Ovary (tissue), 10 donors: ENCODE measurements at regions of chr16 and their contacts with region 1.

Region 1: GRCh38 chr16:11356573-11357331 is 11.5 kb downstream of the RMI2 start:
- DNase-seq: peak; percentile 70 to 82 (median 78)
- H3K4me3 ChIP-seq: no peak overlapping the region
- H3K27ac ChIP-seq: no peak overlapping the region
- H3K4me1 ChIP-seq: peaks cover 17% of the 10 kb centered on the region
- H3K27me3 ChIP-seq: no peaks in the 10 kb centered on the region
- CTCF ChIP-seq: peak; percentile 40 to 51 (median 49)
- EP300 ChIP-seq: no peak
- POLR2A ChIP-seq: no peak

Region 2: GRCh38 chr16:10964039-10964890 is 392.5 kb before region 1 on chr16:
- intact Hi-C with region 1: loop called in 2 of 4 experiments (anchors 10 kb)
- DNase-seq: peak; percentile 75 to 89 (median 85)
- H3K4me3 ChIP-seq: no peak overlapping the region
- H3K27ac ChIP-seq: no peak overlapping the region
- H3K4me1 ChIP-seq: no peaks in the 10 kb centered on the region
- H3K27me3 ChIP-seq: no peaks in the 10 kb centered on the region
- CTCF ChIP-seq: peak; percentile 81 to 93 (median 85)
- EP300 ChIP-seq: no peak
- POLR2A ChIP-seq: no peak

Region 3: DNA sequence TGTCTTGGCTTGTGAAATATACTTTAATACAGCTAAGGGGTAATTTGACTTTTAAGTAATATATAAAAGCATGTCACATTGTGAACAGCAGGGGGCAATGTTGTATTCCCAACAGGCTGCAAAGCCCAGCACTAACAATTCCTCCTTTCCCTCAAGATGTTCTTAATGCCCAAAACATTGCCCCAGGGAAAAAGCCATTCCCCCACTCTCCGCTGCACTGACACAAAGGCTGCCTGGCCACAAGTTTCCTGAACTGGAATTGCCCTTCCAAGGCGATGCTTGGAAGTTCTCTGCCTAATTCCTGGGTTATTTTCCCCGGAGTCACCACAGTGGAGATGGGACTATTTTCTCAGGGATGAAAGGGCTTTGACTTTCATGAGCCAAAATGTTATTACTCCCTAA is 385.2 kb before region 1 on chr16:
- intact Hi-C with region 1: loop called (anchors 5 to 10 kb)
- DNase-seq: peak in 4 of 5 donors; percentile 50 to 70 (median 56)
- H3K4me3 ChIP-seq: no peak overlapping the region
- H3K27ac ChIP-seq: no peak overlapping the region
- H3K4me1 ChIP-seq: peaks cover 7% of the 10 kb centered on the region
- H3K27me3 ChIP-seq: no peaks in the 10 kb centered on the region
- CTCF ChIP-seq: peak; percentile 74 to 93 (median 82)
- EP300 ChIP-seq: no peak
- POLR2A ChIP-seq: no peak

Region 4: DNA sequence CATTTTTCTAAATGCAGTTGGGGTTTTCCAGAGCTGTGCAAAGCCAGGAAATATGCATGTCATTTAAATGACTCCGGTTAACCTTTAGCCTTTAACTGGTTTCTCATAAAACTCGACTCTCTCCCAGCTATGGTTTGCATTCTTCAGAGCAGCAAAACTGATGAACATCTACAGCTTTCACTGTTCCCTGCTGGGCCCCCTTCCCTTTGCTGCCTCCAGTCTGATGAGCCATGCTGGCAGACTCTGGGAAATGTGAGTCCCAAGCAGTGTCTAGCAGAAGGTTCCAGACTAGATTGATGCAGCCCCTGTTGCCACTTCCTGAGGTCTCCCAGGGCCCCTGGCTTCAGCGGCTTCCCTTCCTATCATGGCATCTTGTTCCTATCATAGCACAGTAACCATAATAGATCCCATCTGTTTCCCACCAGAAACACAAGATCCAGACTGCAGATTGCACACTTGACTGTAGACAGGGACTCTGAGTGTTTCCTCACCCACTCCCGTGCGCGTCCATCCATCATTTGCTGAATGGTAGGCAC is 277.0 kb before region 1 on chr16:
- intact Hi-C with region 1: loop called in 1 of 4 experiments (anchors 10 kb)
- DNase-seq: peak in 1 of 5 donors; percentile 20
- H3K4me3 ChIP-seq: no peak overlapping the region
- H3K27ac ChIP-seq: no peak overlapping the region
- H3K4me1 ChIP-seq: peaks cover 23% of the 10 kb centered on the region
- H3K27me3 ChIP-seq: no peaks in the 10 kb centered on the region
- CTCF ChIP-seq: no peak
- EP300 ChIP-seq: no peak
- POLR2A ChIP-seq: no peak

Region 5: DNA sequence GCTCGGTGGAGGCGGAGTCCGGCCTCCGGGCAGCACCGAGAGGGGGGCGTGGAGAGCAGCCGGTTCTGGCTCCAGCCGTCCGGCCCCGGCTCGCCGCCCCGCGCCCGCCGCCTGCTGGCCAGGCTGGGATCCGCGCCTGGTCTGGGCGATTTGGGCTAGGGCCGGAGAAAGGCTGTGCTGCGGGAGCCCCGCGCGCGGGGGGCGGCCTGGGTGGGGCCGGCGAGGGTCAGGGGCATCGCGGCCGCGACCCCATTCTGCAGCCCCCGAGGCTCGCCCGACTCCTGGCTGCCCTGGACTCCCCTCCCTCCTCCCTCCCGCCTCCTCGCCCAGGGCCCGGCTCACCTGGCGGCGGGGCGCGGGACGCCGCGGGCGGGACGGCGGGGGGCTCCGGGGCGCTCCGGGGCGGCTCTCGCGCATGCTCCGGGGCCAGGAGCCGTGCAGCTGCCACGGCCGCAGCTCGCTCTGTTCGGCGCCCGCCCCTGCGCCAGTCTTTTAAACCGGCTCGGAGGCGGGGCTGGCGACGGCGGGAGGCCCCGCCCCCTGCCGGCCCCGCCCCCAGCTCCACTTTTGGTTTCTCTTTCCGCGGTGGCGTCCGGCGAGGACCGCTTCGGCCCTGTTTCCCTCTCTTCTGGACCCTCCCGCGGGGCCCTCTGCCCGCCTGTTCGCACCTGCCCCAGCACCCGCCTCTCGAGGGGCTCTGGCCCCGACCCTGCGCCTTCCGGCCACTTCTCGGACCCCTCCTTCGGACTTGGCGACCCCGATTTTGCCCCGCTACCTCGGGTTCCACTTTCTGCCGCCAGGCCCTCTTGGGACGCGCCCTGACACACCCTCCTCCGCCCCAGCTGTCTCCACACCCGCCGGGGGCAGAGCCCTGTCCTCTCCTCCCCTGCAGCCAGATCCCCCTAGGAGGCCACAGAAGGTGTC is 100.8 kb before region 1 on chr16 and contains the start of gene SOCS1:
- intact Hi-C with region 1: loop called in 2 of 4 experiments (anchors 2 to 5 kb)
- DNase-seq: peak; percentile 85 to 93 (median 89)
- H3K4me3 ChIP-seq: peak within 1 kb of the TSS; percentile 87
- H3K27ac ChIP-seq: peak within 1 kb of the TSS; percentile 82 to 99
- H3K4me1 ChIP-seq: peaks cover 6% of the 10 kb centered on the region
- H3K27me3 ChIP-seq: no peaks in the 10 kb centered on the region
- CTCF ChIP-seq: peak; percentile 85 to 98 (median 98)
- EP300 ChIP-seq: no peak
- POLR2A ChIP-seq: peak; percentile 94
- total RNA-seq, gene SOCS1: 6.3 to 42.7 (median 9.4) TPM